GM12878 (cell line): ENCODE measurements at regions of chr3 and their contacts with region 1.

Region 1: DNA sequence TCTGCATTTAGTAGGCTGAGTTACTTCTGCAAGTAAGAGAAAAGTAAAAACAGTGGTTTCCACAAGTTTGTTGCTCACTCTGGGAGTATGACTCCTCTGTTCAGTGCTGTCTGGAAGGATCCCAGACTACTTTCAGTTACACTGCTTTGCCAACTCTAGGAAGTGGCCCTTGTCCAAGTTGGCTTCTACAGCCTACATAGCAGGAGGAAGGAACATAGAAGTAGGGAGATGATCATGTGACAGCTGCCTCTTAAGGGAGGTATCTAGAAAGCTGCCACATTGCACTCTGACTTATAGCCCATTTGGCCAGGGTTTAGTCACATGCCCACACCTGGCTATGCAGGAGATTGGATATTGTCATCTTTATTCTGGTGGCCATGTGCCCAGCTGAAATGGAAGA is 298.1 kb downstream of the NSUN3 start:
- DNase-seq: no peak
- ATAC-seq: no peak
- H3K4me3 ChIP-seq: no peak overlapping the region
- H3K27ac ChIP-seq: no peak overlapping the region
- H3K4me1 ChIP-seq: no peaks in the 10 kb centered on the region
- H3K27me3 ChIP-seq: no peaks in the 10 kb centered on the region
- CTCF ChIP-seq: no peak
- EP300 ChIP-seq: no peak
- POLR2A ChIP-seq: no peak
- RAD21 ChIP-seq: no peak

Region 2: DNA sequence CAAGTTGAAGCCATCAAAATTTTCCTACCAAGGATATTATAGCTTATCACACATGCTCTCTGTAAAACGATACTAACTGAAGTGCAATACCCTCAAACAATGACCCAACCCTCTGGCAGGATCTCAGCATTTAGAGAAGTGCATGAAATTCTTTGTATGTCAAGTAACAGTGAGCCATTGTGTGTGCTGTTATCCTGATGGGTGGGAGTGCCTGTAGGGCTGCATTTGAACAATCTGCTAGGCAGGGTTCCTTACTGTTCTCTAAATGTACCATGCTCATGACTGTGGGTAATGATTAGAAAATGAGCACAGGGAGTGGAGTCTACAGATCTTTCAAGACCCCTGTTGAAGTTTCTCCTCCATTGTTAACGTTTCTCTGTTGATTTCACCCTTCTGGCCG is 99.9 kb after region 1 on chr3:
- CTCF ChIA-PET with region 1: no interaction called
- POLR2A ChIA-PET with region 1: no interaction called
- RAD21 ChIA-PET with region 1: no interaction called
- SMC1A ChIA-PET with region 1: no interaction called
- in situ Hi-C with region 1: loop called (anchors 25 kb)
- intact Hi-C with region 1: no loop called
- DNase-seq: no peak
- ATAC-seq: no peak
- H3K4me3 ChIP-seq: no peak overlapping the region
- H3K27ac ChIP-seq: no peak overlapping the region
- H3K4me1 ChIP-seq: no peaks in the 10 kb centered on the region
- H3K27me3 ChIP-seq: no peaks in the 10 kb centered on the region
- CTCF ChIP-seq: no peak
- EP300 ChIP-seq: no peak
- POLR2A ChIP-seq: no peak
- RAD21 ChIP-seq: no peak